Dendritic cell treated with granulocyte-macrophage colony-stimulating factor and Interleukin-4, amounts not matched to agents 40 ng/mL and 50 ng/mL, for 4 days (primary cell): ENCODE measurements at regions of chr11 and their contacts with region 1.

Region 1: DNA sequence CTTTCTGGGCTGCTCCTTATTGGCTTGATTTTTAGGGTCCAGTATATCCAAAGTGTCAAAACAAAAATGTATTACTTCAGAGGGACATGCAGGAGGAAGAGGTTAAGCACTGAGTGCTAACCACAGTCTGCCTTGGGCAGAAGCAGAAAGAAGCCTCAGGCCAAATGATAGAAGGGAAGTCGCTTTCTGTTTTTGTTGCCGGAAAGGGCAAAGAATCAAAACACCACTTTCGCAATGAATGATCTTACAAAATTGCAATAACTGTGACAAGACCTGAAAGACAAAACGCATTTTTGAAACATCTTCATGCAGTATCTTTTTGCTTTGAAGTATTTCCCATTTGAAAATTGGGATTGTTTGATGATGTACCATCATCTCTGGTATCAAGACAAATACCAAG is 70.1 kb upstream of the PICALM start:
- H3K4me3 Mint-ChIP-seq: peak overlapping the region; percentile 9
- H3K27ac Mint-ChIP-seq: peak overlapping the region; percentile 97
- H3K4me1 Mint-ChIP-seq: peaks cover 78% of the 10 kb centered on the region
- H3K27me3 Mint-ChIP-seq: no peaks in the 10 kb centered on the region

Region 2: DNA sequence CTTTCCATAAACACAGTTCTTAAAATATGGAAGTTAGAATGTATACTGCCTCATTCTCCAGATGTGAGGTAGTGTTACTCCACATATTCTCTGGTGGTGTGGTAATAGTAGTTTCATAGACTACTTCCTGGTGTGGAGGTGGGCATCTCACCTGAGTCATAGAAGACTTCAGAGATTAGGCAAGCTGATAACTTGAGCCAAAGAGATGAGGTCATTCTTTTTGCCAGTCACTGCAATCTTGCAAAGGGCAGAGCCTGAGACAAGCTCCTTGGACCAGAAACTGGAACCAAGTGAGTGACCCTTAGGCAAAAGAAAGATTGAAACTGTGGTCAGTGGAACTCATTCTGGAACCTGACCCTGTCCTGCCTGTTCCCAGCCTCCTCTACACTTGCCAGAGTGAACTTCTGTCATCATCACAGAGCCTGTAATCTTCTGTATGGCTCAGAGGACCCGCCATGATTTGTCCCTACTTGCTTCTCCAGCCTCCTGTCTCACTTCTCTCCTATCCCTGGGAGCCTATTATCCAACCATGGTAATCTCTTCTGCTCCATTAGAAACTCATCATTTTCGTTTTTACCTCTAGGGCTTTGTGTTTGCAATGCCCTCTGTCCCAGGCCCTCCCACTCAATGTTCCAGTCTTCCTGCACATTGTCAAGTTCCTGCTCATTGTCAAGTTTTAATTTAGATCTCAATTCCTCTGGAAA is 294.4 kb before region 1 on chr11:
- intact Hi-C with region 1: no loop called
- H3K4me3 Mint-ChIP-seq: no peak overlapping the region
- H3K27ac Mint-ChIP-seq: no peak overlapping the region
- H3K4me1 Mint-ChIP-seq: peaks cover 6% of the 10 kb centered on the region
- H3K27me3 Mint-ChIP-seq: no peaks in the 10 kb centered on the region

Region 3: DNA sequence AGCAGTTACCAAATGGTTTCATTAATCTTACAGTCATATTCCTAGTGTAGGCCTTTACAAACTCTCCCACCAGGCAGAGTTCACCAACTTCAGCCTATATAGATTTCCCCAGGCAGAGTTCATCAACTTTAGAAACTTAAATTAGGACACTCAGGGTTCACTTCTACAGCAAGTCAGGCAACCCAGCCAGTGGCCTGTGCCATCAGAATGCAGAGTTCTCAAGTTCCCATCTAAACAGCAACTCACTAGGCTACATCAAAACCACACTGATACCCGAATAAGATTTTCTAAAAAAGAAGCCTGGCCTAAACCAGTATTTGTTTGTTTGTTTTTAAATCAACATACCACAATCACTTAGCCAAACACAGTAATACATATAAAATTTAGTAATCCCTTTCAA is 103.8 kb before region 1 on chr11:
- intact Hi-C with region 1: no loop called
- H3K4me3 Mint-ChIP-seq: no peak overlapping the region
- H3K27ac Mint-ChIP-seq: peak overlapping the region; percentile 45
- H3K4me1 Mint-ChIP-seq: peaks cover 44% of the 10 kb centered on the region
- H3K27me3 Mint-ChIP-seq: no peaks in the 10 kb centered on the region

Region 4: GRCh38 chr11:86068951-86069407 is 70.0 kb before region 1 on chr11 and contains the start of gene PICALM:
- intact Hi-C with region 1: loop called (anchors 1 kb)
- H3K4me3 Mint-ChIP-seq: peak within 1 kb of the TSS; percentile 97
- H3K27ac Mint-ChIP-seq: peak within 1 kb of the TSS; percentile 99
- H3K4me1 Mint-ChIP-seq: peaks cover 37% of the 10 kb centered on the region
- H3K27me3 Mint-ChIP-seq: no peaks in the 10 kb centered on the region

Region 5: GRCh38 chr11:86156381-86156955 is 17.5 kb after region 1 on chr11:
- intact Hi-C with region 1: loop called (anchors 2 kb)
- H3K4me3 Mint-ChIP-seq: peak overlapping the region; percentile 27
- H3K27ac Mint-ChIP-seq: peak overlapping the region; percentile 93
- H3K4me1 Mint-ChIP-seq: peaks cover 70% of the 10 kb centered on the region
- H3K27me3 Mint-ChIP-seq: no peaks in the 10 kb centered on the region

Region 6: GRCh38 chr11:86174101-86175046 is 35.4 kb after region 1 on chr11:
- intact Hi-C with region 1: loop called (anchors 5 kb)
- H3K4me3 Mint-ChIP-seq: no peak overlapping the region
- H3K27ac Mint-ChIP-seq: no peak overlapping the region
- H3K4me1 Mint-ChIP-seq: peaks cover 11% of the 10 kb centered on the region
- H3K27me3 Mint-ChIP-seq: no peaks in the 10 kb centered on the region

Region 7: GRCh38 chr11:86193297-86194095 is 54.5 kb after region 1 on chr11:
- intact Hi-C with region 1: loop called (anchors 5 kb)
- H3K4me3 Mint-ChIP-seq: no peak overlapping the region
- H3K27ac Mint-ChIP-seq: peak overlapping the region; percentile 77
- H3K4me1 Mint-ChIP-seq: peaks cover 73% of the 10 kb centered on the region
- H3K27me3 Mint-ChIP-seq: no peaks in the 10 kb centered on the region

Region 8: DNA sequence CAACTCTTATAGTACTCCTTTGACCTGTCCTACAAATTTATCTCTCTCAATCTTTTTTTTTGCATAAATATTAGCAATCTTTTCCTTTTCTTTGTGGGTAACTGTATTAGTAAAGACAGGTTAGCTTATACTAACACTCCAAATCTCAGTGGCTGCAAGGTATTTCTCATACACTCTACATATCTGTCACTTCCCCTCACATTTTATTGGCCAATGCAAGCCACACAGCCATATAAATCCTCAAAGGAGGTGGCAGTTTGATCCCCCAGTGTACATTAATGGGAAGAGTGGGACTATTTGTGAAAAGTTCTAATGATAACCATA is 63.0 kb after region 1 on chr11:
- intact Hi-C with region 1: loop called (anchors 2 kb)
- H3K4me3 Mint-ChIP-seq: no peak overlapping the region
- H3K27ac Mint-ChIP-seq: no peak overlapping the region
- H3K4me1 Mint-ChIP-seq: peaks cover 28% of the 10 kb centered on the region
- H3K27me3 Mint-ChIP-seq: no peaks in the 10 kb centered on the region